ENCODE measurements at regions of chr1 and their contacts with region 1.

Region 1: DNA sequence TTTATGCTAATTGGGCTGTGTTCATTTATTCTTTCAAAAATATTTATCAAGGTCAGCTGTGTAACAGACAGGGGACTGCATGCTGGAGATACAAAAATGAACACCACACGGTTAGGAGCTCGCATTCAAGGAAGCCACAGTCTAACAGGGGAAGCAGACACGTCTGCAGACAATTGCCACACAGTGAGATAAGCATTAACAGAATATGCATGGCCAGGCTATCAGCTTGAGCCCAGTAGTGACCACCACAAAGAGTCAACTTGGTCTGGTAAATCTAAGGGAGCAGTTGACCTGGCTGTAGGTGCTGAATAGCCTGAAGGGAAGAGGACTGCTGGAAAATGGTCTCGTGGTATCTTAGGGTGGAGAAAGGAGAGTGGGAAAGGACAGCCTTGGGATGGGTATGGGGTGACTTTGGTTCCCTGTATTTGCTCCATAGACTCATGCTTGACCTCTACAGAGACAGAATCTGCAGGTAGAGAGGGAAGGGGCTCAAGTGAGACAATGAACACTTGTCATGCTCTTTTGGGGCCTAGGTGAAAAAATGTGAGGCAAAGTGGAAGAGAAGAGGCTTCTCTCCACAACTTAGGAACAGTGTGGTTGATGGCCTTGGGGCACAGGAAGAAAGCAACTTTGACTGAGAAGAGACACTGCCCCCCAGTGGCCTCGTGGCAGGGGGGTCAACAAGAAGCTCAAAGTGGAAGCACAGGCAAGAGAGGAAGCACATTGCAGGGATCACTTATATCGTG is 7.6 kb upstream of the NPL start:
- DNase-seq: peak in 2 of 4 donors; percentile 46 to 66
- ATAC-seq: peak; percentile 76
- H3K4me3 ChIP-seq: no peak overlapping the region
- H3K27ac ChIP-seq: no peak overlapping the region
- H3K4me1 ChIP-seq: no peaks in the 10 kb centered on the region
- H3K27me3 ChIP-seq: no peaks in the 10 kb centered on the region
- CTCF ChIP-seq: peak; percentile 42 to 67

Region 2: DNA sequence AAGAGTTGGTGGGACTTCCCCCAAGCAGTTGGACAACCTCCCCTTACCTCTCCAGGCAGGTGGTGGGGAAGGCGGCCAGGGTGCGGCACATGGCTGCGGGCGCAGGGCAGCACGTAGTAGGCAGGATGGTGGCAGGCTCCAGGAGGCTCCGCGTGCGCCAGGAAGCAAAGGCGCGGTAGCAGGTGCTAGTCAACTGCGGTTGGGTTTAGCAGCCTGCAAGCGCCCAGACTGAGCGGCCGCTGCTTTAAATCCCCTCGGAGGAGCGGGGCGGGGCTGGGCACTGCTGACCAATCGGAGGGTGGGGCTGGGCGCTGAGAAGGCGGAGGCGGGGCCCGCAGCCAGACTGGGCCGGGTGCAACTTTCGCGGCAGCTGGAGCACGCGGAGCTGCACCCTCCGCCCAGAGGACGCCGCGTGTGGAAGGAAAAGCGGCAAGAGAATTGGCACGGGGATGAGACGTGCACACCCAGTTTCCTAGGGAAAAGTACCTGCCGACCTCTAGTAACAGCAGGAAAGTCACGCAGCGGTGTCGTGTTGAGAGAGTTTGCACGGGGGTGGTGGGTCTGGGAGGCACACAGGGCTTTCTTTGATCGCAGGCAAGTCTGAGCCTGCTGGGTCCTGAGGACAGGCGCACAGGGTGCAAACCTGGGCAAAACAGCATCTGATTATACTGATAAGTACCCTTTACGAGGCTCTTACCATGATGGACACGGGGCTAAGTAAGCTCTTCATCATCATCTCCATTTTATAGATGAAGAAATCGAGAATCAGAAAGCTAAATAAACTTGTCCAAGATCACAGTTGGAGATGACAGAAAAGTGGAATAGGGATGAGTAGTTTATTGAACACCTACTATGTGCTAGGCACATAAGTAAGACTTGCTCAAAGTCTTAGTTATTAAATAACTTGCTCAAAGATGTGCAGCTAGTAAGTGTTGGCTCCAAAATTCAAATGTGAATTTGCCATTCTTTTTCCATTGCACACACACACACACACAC is 177.5 kb before region 1 on chr1 and contains the start of gene RGS16:
- intact Hi-C with region 1: loop called (anchors 2 to 5 kb)
- DNase-seq: peak; percentile 74 to 99 (median 92)
- ATAC-seq: peak; percentile 92
- H3K4me3 ChIP-seq: peak within 1 kb of the TSS; percentile 38 to 57
- H3K27ac ChIP-seq: peak within 1 kb of the TSS; percentile 39 to 71
- H3K4me1 ChIP-seq: peaks cover 9 to 52% of the 10 kb centered on the region in 2 donors
- H3K27me3 ChIP-seq: peaks cover 0 to 19% of the 10 kb centered on the region in 2 donors
- CTCF ChIP-seq: no peak
- polyA plus RNA-seq, gene RGS16: 3.5 to 7.3 (median 5.0) TPM

Measured in left lung (tissue), 14 donors.